Heart right ventricle (tissue), 16 donors: ENCODE measurements at regions of chr6 and their contacts with region 1.

Region 1: DNA sequence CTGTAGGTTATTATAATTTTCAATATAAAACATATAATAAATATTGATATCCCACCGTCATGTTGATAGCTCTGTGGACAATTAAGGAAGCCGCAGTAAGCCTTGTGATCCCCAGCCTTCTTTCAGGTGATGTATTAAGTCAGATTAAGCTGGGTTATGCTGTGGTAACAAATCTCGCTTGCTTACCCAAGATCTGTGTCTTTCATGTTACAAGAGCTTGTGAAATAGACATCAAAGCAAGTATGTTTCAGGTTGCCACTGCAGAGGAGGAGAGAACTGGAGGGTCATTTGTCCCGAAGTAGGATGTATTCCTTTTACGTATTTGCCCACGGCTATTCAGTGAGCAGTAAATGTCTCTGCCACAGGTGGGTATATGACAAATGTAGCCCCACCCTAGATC is 17.8 kb upstream of the BCKDHB start:
- DNase-seq: no peak
- ATAC-seq: no peak
- H3K4me3 ChIP-seq: no peak overlapping the region
- H3K27ac ChIP-seq: no peak overlapping the region
- H3K4me1 ChIP-seq: no peaks in the 10 kb centered on the region
- H3K27me3 ChIP-seq: peaks cover 0 to 5% (median 0%) of the 10 kb centered on the region in 7 donors
- CTCF ChIP-seq: no peak

Region 2: DNA sequence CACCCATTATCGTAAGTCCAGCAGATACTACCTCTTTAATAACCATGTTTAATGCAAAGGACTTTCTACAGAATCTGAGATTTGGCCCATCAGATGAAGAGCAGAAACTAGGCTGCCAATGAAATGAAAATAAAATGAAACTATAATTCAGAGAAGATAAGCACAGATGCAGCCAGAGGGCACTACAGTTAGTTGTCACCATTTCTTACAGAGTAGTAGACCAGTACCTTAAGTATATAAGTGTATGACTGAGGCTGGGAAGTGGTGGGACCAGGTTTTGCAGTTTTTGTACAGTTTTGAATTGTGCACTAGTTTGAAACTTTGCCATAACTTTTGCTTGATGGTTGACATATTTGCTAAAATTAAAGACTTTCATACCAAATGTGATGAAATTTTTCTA is 233.5 kb before region 1 on chr6:
- intact Hi-C with region 1: no loop called
- DNase-seq: no peak
- ATAC-seq: no peak
- H3K4me3 ChIP-seq: no peak overlapping the region
- H3K27ac ChIP-seq: no peak overlapping the region
- H3K4me1 ChIP-seq: no peaks in the 10 kb centered on the region
- H3K27me3 ChIP-seq: no peaks in the 10 kb centered on the region
- CTCF ChIP-seq: no peak

Region 3: GRCh38 chr6:79878142-79878753 is 210.4 kb before region 1 on chr6:
- intact Hi-C with region 1: loop called in 1 of 10 experiments (anchors 5 kb)
- DNase-seq: peak; percentile 35 to 46
- ATAC-seq: peak; percentile 34 to 95 (median 86)
- H3K4me3 ChIP-seq: no peak overlapping the region
- H3K27ac ChIP-seq: no peak overlapping the region
- H3K4me1 ChIP-seq: peaks cover 0 to 4% (median 0%) of the 10 kb centered on the region in 9 donors
- H3K27me3 ChIP-seq: no peaks in the 10 kb centered on the region
- CTCF ChIP-seq: no peak

Region 4: DNA sequence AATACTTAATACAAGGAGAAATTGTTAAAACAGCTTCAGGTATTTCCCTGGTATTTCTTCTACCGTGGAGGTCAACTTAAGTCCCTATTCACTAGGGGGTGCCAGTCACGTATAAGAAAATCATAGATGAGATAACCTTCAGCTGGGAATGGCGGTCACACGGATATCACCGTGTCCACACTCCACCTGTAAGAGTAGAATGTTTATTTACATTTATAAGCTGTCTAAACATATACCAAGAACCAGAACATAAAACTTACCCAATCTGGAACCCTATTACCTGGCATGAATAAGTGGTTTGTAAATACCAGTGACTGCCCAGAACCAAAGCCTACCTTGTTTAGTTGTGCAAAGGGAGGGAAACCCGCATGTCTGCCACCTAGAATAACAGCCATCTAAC is 139.4 kb before region 1 on chr6:
- intact Hi-C with region 1: loop called in 4 of 10 experiments (anchors 5 to 10 kb)
- DNase-seq: peak in 1 of 2 donors; percentile 9
- ATAC-seq: no peak
- H3K4me3 ChIP-seq: no peak overlapping the region
- H3K27ac ChIP-seq: no peak overlapping the region
- H3K4me1 ChIP-seq: peaks cover 0 to 22% (median 13%) of the 10 kb centered on the region in 9 donors
- H3K27me3 ChIP-seq: peaks cover 0 to 60% (median 38%) of the 10 kb centered on the region in 7 donors
- CTCF ChIP-seq: peak in 7 of 9 donors; percentile 23 to 62 (median 38)

Region 5: DNA sequence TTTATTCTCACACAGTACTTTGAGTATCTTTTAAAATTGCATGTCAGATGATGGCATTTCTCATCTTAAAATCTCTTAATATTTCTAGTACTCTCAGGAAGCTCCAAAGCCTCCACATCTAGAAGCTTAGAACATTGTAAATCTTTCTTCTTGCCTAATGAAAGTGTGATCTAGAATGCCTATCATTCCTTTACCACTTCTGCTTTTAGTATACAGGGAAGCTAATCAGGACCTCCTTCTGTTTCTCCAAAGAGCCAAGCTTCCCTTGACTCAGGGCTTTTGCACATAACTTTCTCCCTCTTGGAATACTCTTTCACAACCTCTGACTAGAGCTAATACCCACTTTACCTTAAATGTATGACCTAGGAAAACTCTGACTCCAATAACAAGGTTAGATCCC is 133.8 kb before region 1 on chr6:
- intact Hi-C with region 1: loop called in 1 of 10 experiments (anchors 5 kb)
- DNase-seq: no peak
- ATAC-seq: no peak
- H3K4me3 ChIP-seq: no peak overlapping the region
- H3K27ac ChIP-seq: no peak overlapping the region
- H3K4me1 ChIP-seq: no peaks in the 10 kb centered on the region
- H3K27me3 ChIP-seq: peaks cover 0 to 8% (median 0%) of the 10 kb centered on the region in 7 donors
- CTCF ChIP-seq: no peak